ENCODE measurements at regions of chr19 and their contacts with region 1.

Region 1: GRCh38 chr19:10259162-10259905 is 7.3 kb downstream of the MRPL4 start:
- DNase-seq: peak; percentile 74 to 95 (median 82)
- ATAC-seq: peak; percentile 92
- H3K4me3 ChIP-seq: no peak overlapping the region
- H3K4me3 Mint-ChIP-seq: no peak overlapping the region
- H3K27ac ChIP-seq: no peak overlapping the region
- H3K27ac Mint-ChIP-seq: peak overlapping the region; percentile 47
- H3K4me1 ChIP-seq: peaks cover 20% of the 10 kb centered on the region
- H3K4me1 Mint-ChIP-seq: peaks cover 16% of the 10 kb centered on the region
- H3K27me3 ChIP-seq: no peaks in the 10 kb centered on the region
- H3K27me3 Mint-ChIP-seq: no peaks in the 10 kb centered on the region
- CTCF ChIP-seq: peak; percentile 56

Region 2: GRCh38 chr19:10120538-10121189 is 138.7 kb before region 1 on chr19:
- CTCF ChIA-PET with region 1: no interaction called
- POLR2A ChIA-PET with region 1: no interaction called
- intact Hi-C with region 1: no loop called
- DNase-seq: no peak
- ATAC-seq: no peak
- H3K4me3 ChIP-seq: no peak overlapping the region
- H3K4me3 Mint-ChIP-seq: no peak overlapping the region
- H3K27ac ChIP-seq: no peak overlapping the region
- H3K27ac Mint-ChIP-seq: no peak overlapping the region
- H3K4me1 ChIP-seq: peaks cover 42% of the 10 kb centered on the region
- H3K4me1 Mint-ChIP-seq: peaks cover 11% of the 10 kb centered on the region
- H3K27me3 ChIP-seq: no peaks in the 10 kb centered on the region
- H3K27me3 Mint-ChIP-seq: no peaks in the 10 kb centered on the region
- CTCF ChIP-seq: no peak

Region 3: GRCh38 chr19:10332955-10333757 is 73.8 kb after region 1 on chr19 and contains the start of gene RAVER1:
- CTCF ChIA-PET with region 1: no interaction called
- POLR2A ChIA-PET with region 1: no interaction called
- intact Hi-C with region 1: no loop called
- DNase-seq: peak; percentile 96 to 100 (median 98)
- ATAC-seq: peak; percentile 96
- H3K4me3 ChIP-seq: peak within 1 kb of the TSS; percentile 91
- H3K4me3 Mint-ChIP-seq: peak within 1 kb of the TSS; percentile 96
- H3K27ac ChIP-seq: peak within 1 kb of the TSS; percentile 87 to 91
- H3K27ac Mint-ChIP-seq: peak within 1 kb of the TSS; percentile 92
- H3K4me1 ChIP-seq: peaks cover 54% of the 10 kb centered on the region
- H3K4me1 Mint-ChIP-seq: peaks cover 23% of the 10 kb centered on the region
- H3K27me3 ChIP-seq: no peaks in the 10 kb centered on the region
- H3K27me3 Mint-ChIP-seq: no peaks in the 10 kb centered on the region
- CTCF ChIP-seq: no peak
- total RNA-seq, gene RAVER1: 20.5 to 21.3 TPM

Region 4: GRCh38 chr19:10388957-10389356 is 129.6 kb after region 1 on chr19:
- CTCF ChIA-PET with region 1: interaction called, 56 read pairs
- POLR2A ChIA-PET with region 1: interaction called, 10 read pairs
- intact Hi-C with region 1: loop called (anchors 2 kb)
- DNase-seq: peak; percentile 72 to 94 (median 82)
- ATAC-seq: peak; percentile 62
- H3K4me3 ChIP-seq: no peak overlapping the region
- H3K4me3 Mint-ChIP-seq: no peak overlapping the region
- H3K27ac ChIP-seq: no peak overlapping the region
- H3K27ac Mint-ChIP-seq: no peak overlapping the region
- H3K4me1 ChIP-seq: peaks cover 7% of the 10 kb centered on the region
- H3K4me1 Mint-ChIP-seq: peaks cover 4% of the 10 kb centered on the region
- H3K27me3 ChIP-seq: no peaks in the 10 kb centered on the region
- H3K27me3 Mint-ChIP-seq: no peaks in the 10 kb centered on the region
- CTCF ChIP-seq: peak; percentile 96

Region 5: DNA sequence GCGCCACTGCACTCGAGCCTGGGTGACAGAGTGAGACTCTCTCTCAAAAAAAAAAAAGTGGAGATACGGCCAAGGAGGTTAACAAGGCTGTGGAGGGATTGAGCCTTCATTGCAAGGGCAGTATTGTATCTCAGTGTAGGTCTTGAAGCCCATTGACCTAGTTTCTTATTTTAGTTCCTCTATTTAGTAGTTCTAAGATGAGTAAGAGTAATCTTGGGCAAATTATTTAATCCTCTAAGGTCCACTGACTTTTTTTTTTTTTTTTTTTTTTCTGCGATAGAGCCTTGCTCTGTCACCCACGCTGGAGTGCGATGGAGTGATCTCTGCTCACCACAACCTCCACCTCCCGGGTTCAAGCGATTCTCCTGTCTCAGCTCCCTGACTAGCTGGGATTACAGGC is 380.5 kb after region 1 on chr19:
- CTCF ChIA-PET with region 1: no interaction called
- POLR2A ChIA-PET with region 1: no interaction called
- intact Hi-C with region 1: no loop called
- DNase-seq: no peak
- ATAC-seq: no peak
- H3K4me3 ChIP-seq: no peak overlapping the region
- H3K4me3 Mint-ChIP-seq: no peak overlapping the region
- H3K27ac ChIP-seq: no peak overlapping the region
- H3K27ac Mint-ChIP-seq: peak overlapping the region; percentile 39
- H3K4me1 ChIP-seq: peaks cover 28% of the 10 kb centered on the region
- H3K4me1 Mint-ChIP-seq: peaks cover 24% of the 10 kb centered on the region
- H3K27me3 ChIP-seq: no peaks in the 10 kb centered on the region
- H3K27me3 Mint-ChIP-seq: no peaks in the 10 kb centered on the region
- CTCF ChIP-seq: no peak

Region 6: GRCh38 chr19:10975374-10976130 is 716.2 kb after region 1 on chr19:
- CTCF ChIA-PET with region 1: no interaction called
- POLR2A ChIA-PET with region 1: no interaction called
- intact Hi-C with region 1: no loop called
- DNase-seq: no peak
- ATAC-seq: no peak
- H3K4me3 ChIP-seq: no peak overlapping the region
- H3K4me3 Mint-ChIP-seq: no peak overlapping the region
- H3K27ac ChIP-seq: no peak overlapping the region
- H3K27ac Mint-ChIP-seq: peak overlapping the region; percentile 62
- H3K4me1 ChIP-seq: peaks cover 38% of the 10 kb centered on the region
- H3K4me1 Mint-ChIP-seq: peaks cover 38% of the 10 kb centered on the region
- H3K27me3 ChIP-seq: no peaks in the 10 kb centered on the region
- H3K27me3 Mint-ChIP-seq: no peaks in the 10 kb centered on the region
- CTCF ChIP-seq: no peak

Measured in CD4-positive, alpha-beta T cell (primary cell).